ENCODE measurements at regions of chr7 and their contacts with region 1.

Region 1: DNA sequence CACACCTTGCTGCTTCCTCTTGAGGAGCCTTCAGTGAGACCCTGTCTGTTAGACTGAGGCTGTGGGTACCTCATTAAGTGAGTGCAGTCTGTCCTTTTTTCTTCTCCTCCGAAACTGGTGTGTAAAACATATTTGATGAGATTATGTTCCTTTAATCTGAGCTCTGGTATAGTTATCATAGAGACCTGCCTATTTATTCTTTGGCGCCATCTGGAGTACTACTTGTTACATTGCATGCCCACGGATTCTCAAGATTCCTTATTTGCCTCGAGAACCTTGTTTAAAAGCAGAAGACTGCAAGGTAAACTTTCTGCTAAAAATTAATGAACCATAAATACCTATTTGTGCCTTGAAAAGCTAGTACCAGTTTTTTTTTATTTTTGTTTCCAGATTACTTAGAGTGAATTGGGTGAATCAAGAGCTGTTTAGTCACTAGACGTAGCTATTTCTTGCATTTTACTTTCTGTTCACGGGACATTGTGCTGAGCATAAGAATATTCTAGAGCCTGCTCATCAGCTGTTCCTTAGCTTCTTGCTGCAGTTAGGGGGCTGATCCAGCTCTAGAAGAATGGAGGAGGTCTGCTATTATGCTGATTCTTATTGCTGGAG is 16.9 kb upstream of the STMP1 start:
- H3K4me3 ChIP-seq: no peak overlapping the region
- H3K27ac ChIP-seq: no peak overlapping the region
- H3K4me1 ChIP-seq: no peaks in the 10 kb centered on the region
- CTCF ChIP-seq: no peak

Region 2: DNA sequence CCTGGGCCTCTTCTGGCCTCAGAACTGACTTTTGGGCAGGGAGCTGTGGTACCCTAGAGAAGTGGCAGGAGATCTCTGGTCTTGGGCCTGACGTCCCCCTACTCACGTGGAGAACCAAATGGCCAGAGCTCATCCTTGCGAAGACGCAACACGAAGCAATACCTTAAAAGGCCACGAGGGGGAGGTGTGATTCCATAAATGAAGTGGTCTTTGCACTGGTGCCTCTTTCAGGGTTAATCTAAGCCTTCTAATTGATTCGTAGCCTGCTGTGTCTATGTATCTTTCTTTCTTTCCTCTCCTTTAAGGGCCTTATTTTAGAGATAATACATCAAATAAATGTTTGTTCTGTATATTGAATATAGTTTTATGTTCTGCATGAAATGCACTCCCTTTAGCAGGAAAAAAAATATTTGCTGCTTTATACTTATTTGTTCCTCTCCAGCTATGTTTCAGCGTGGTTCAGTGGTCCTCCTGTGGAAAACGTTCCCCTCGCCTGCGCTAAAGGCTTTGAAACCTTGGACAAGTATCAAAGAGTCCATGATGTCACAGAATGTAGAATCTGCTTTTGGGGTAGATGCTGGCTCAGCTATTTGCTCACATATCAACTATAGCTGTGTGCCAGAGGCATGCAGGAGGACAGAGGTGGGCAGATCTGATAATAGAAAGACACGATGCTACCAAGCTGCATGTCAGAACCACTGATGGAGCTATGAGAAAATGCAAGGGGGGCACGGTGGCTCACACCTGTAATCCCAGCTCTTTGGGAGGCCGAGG is 370.7 kb before region 1 on chr7:
- CTCF ChIA-PET with region 1: interaction called, 18 read pairs
- POLR2A ChIA-PET with region 1: no interaction called
- H3K4me3 ChIP-seq: no peak overlapping the region
- H3K27ac ChIP-seq: no peak overlapping the region
- H3K4me1 ChIP-seq: no peaks in the 10 kb centered on the region
- CTCF ChIP-seq: no peak

Region 3: DNA sequence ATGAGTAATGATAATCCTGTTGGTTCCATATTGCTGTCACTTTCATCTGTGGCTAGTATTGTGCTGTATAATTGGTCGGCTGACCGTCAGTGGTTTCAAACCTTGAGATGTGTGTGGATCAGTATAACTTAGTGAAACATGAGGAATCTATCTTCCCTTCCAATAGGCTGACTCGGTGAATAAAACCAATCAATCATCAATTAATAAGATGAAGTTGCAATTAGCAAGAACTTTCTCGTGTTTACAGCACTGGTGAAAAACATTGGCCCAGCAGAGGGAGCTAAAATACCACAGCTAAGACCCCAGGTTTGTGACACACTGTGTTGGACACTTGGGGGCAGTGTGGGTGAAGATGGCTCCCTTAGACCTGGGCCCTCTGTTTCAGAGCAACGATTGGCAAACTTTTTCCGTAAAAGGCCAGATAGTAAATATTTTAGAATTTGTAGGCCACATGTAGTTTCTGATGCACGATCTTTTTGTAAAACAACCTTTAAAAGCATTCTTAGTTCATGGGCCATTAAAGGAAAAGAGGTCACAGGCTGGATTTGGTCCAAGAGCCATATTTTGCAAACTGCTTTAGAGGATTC is 363.9 kb before region 1 on chr7:
- CTCF ChIA-PET with region 1: interaction called, 18 read pairs
- POLR2A ChIA-PET with region 1: no interaction called
- H3K4me3 ChIP-seq: no peak overlapping the region
- H3K27ac ChIP-seq: no peak overlapping the region
- H3K4me1 ChIP-seq: no peaks in the 10 kb centered on the region
- CTCF ChIP-seq: peak; percentile 97

Region 4: DNA sequence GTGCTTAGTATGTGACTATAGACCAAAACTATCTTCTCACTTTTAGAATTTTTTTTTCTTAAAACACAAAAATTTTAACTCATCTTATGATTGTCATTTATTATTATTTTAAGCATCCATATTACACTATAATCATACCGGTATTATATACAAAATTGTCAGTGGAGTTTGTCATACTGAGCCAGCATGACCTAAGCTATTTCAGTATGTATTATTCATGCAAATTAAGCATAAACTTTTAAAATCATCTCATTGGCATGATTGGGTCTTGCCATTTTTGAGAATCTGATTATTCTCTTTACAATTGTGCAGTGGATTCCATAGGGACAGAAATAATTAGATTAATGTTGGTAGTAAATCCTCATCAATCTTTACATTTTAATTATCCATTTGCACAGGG is 29.3 kb before region 1 on chr7:
- CTCF ChIA-PET with region 1: interaction called, 25 read pairs
- POLR2A ChIA-PET with region 1: no interaction called
- H3K4me3 ChIP-seq: no peak overlapping the region
- H3K27ac ChIP-seq: no peak overlapping the region
- H3K4me1 ChIP-seq: no peaks in the 10 kb centered on the region
- CTCF ChIP-seq: no peak

Region 5: GRCh38 chr7:135620980-135621850 is 24.2 kb before region 1 on chr7:
- CTCF ChIA-PET with region 1: interaction called, 25 read pairs
- POLR2A ChIA-PET with region 1: no interaction called
- H3K4me3 ChIP-seq: no peak overlapping the region
- H3K27ac ChIP-seq: no peak overlapping the region
- H3K4me1 ChIP-seq: no peaks in the 10 kb centered on the region
- CTCF ChIP-seq: no peak

Region 6: DNA sequence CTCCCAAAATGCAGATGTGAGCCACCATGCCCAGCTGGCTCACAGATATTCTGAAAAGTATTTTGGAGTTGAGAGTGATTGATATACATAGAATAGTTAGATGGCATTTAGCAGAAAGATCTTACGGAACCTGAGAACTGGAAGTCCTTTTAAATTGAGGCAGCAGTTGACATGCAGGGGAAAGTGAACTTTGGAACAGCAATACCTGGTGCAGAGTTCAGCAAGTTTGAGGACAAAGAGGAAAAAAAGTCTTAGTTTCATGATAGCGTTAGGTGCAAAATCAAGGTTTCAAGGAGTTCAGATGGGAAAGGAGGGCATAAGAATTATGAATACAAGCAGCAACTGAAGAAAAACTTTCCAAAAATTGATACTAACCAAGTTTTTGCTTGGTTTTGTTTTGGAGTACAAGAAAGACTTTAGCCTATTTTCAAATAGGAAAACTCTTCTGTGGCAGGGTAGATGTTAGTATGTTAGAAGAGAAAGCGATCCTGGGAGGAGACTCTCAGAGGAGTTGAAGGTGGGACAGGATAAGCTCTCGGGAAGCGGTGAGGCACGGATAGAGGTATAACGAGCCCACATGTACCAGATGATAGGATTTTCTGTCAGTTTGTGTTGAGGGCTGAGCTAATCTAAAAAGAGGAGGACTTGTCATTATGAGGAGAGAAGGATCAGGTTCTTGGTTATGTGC is 11.1 kb before region 1 on chr7:
- CTCF ChIA-PET with region 1: interaction called, 14 read pairs
- POLR2A ChIA-PET with region 1: no interaction called
- H3K4me3 ChIP-seq: no peak overlapping the region
- H3K27ac ChIP-seq: no peak overlapping the region
- H3K4me1 ChIP-seq: no peaks in the 10 kb centered on the region
- CTCF ChIP-seq: no peak

Region 7: GRCh38 chr7:135697276-135698049 is 52.1 kb after region 1 on chr7:
- CTCF ChIA-PET with region 1: no interaction called
- POLR2A ChIA-PET with region 1: no interaction called
- H3K4me3 ChIP-seq: no peak overlapping the region
- H3K27ac ChIP-seq: no peak overlapping the region
- H3K4me1 ChIP-seq: no peaks in the 10 kb centered on the region
- CTCF ChIP-seq: no peak